Cardiac septum (tissue), 1 donor: ENCODE measurements at regions of chr1 and their contacts with region 1.

Region 1: GRCh38 chr1:33228935-33229487 is 27.3 kb upstream of the ZNF362 start:
- DNase-seq: no peak

Region 2: DNA sequence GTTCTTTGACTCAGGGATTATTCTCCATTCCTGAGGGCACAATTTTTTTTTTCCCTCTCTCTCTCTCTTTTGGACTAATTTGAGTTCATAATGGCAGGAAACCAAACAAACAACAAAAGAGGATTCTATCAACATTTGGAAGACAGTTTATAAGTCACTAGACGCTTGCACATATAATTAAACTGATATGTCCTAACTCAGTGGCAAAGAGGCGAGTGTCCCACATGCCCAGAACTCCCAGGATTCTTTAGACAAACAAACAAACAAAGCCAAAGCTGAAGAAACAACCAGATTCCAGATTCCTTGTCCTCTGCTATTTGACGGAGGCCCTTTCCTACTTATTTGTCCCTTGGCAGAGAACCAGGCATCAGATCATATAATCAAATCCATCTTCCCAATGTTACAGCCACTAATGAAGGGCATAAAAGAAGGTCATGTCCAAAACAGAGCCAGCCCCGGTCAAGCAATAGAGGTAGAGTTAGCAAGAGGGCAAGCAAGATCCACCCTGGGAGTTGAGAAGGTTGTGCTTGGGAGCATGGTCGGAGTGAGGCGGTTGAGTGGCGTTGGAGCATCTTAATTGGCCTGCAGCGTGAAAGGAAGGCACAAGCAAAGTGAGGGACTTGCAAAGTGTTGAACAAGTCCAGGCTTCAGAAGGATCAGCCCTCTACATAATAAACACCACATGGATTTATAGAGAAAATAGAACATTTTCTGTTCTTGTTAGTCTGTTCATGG is 57.6 kb after region 1 on chr1:
- intact Hi-C with region 1: loop called (anchors 5 kb)
- DNase-seq: peak; percentile 27

Region 3: GRCh38 chr1:33384040-33384812 is 155.2 kb after region 1 on chr1:
- intact Hi-C with region 1: no loop called
- DNase-seq: no peak